HepG2 (cell line): ENCODE measurements at regions of chr17 and their contacts with region 1.

Region 1: DNA sequence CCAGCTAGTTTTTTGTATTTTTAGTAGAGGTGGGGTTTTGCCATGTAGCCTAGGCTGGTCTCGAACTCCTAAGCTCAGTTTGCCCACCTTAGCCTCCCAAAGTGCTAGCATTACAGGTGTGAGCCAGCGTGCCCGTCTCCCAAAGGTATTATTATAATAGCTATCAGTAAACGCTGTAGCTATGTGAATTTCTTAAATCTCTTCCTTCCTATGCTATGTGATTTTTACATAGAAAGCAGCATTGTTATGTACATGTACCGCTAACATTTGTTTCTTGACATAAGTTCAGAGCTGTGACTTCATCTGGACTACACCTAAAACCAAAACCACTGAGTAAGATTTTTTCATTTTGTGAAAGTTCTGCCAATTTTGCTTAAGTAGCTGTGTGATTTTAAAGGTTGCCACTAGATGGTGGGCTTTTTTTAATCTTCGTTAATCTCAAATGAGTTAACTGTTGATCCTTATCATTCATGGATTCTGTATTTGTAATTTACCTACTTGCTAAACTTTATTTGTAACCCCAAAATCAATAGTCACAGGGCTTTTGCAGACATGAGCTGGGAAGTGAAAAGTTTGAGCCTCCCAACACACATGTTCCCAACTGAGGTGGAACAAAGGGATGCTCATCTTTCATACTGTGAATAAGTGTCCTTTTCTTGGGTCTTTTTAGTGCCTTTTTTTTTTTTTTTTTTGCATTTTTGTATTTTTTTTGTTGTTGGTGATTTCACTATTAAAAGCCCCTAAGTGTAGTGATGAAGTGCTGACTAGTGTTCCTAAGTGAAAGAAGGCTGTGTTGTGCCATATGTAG is 21.9 kb downstream of the PRKAR1A start:
- DNase-seq: no peak
- ATAC-seq: no peak
- H3K4me3 ChIP-seq: no peak overlapping the region
- H3K27ac ChIP-seq: no peak overlapping the region
- H3K4me1 ChIP-seq: peaks cover 18% of the 10 kb centered on the region
- H3K27me3 ChIP-seq: no peaks in the 10 kb centered on the region
- CTCF ChIP-seq: 0 out of 2 replicates have a peak, but pooled peaks have one; percentile 34
- EP300 ChIP-seq: no peak
- POLR2A ChIP-seq: no peak; a peak in 1 of 4 replicates
- RAD21 ChIP-seq: no peak

Region 2: DNA sequence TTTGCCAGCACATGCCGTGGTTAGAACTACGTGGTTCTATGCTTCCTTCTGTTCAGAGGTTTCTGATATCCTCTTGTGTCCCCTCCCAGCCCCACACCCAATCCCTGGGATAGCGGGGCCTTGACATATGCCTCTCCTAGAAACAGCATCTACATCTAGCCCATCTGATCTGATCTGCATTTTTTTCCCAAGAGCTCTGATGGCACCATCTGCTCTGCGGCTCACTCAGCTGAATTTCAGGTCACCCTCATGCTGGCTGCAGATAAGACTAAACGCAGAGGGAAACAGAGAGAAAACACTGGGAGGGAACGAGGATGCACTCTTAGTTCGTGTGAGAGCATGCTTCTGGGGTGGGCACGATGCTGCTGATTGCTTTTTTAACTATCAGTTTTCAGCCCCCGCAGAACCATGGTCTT is 87.5 kb before region 1 on chr17:
- CTCF ChIA-PET with region 1: no interaction called
- POLR2A ChIA-PET with region 1: no interaction called
- in situ Hi-C with region 1: no loop called
- intact Hi-C with region 1: no loop called
- DNase-seq: no peak
- ATAC-seq: no peak
- H3K4me3 ChIP-seq: no peak overlapping the region
- H3K27ac ChIP-seq: no peak overlapping the region
- H3K4me1 ChIP-seq: peaks cover 12% of the 10 kb centered on the region
- H3K27me3 ChIP-seq: no peaks in the 10 kb centered on the region
- CTCF ChIP-seq: no peak
- EP300 ChIP-seq: no peak
- POLR2A ChIP-seq: no peak
- RAD21 ChIP-seq: no peak

Region 3: GRCh38 chr17:68544111-68544915 is 10.2 kb after region 1 on chr17:
- CTCF ChIA-PET with region 1: no interaction called
- POLR2A ChIA-PET with region 1: no interaction called
- in situ Hi-C with region 1: no loop called
- intact Hi-C with region 1: no loop called
- DNase-seq: no peak
- ATAC-seq: no peak
- H3K4me3 ChIP-seq: no peak overlapping the region
- H3K27ac ChIP-seq: no peak overlapping the region
- H3K4me1 ChIP-seq: no peaks in the 10 kb centered on the region
- H3K27me3 ChIP-seq: no peaks in the 10 kb centered on the region
- CTCF ChIP-seq: no peak
- EP300 ChIP-seq: no peak
- POLR2A ChIP-seq: no peak
- RAD21 ChIP-seq: no peak

Region 4: DNA sequence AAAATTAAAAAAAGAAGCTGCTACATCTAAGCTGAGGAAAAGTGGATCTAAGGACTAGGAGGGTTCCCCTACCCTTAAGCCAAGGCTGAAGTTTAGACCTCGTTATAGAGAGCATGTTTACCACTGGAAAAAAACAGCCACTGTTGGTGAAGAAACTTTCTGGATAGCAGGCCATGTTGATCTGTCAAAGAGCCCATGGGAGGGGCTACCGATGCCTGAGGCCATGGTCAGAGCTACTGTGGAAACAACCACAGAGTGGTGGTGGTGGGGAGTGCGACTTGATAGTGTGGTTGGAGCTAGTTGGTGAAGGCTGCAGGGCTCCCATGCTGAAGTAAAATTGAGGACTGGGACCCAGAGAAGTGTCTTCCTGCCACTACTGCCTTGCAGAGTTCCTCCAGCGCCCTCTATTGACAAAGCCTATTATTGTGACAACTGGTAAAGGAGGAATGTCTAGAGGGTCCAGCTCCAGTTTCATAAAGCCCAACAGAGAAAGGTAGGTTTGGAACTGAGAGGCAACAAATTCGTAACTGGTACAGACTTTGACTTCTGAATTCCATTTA is 79.7 kb after region 1 on chr17:
- CTCF ChIA-PET with region 1: no interaction called
- POLR2A ChIA-PET with region 1: interaction called, 4 read pairs
- in situ Hi-C with region 1: no loop called
- intact Hi-C with region 1: loop called (anchors 2 kb)
- DNase-seq: peak; percentile 86
- ATAC-seq: peak; percentile 92
- H3K4me3 ChIP-seq: peak overlapping the region in 2 of 3 experiments; percentile 23 to 47; a peak in 2 of 6 replicates
- H3K27ac ChIP-seq: peak overlapping the region; percentile 37
- H3K4me1 ChIP-seq: peaks cover 35% of the 10 kb centered on the region
- H3K27me3 ChIP-seq: no peaks in the 10 kb centered on the region; a peak in 1 of 5 replicates
- CTCF ChIP-seq: peak; percentile 94
- EP300 ChIP-seq: no peak; a peak in 1 of 4 replicates
- POLR2A ChIP-seq: no peak
- RAD21 ChIP-seq: peak; percentile 85

Region 5: DNA sequence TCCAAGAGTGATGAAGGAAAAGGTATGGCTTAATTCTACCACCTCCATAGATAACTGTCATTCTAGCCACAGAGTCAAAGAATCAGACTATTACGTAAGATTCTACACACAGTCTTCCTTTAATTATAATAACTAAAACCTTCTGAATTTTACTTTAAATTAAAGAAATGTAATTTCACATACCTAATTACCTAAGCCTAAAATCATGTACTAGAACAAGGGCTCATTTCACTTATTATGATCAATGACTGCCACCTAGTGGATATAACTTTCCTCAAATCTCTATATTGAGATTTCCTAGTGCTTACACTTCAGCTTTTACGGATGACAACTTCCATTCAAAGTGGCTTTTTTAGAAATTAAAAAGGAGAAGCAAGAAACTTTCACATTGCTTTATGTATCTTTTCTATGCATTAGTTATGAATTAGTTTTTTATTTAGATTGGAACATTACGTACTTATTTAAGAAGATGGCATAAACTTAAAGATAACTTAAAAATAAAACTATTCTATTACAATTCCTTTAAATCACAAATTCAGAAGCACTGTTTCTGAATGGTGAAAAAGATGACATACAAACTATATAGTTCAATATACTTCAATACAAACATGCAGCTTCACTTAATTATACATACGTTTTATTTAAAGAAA is 712.8 kb after region 1 on chr17:
- CTCF ChIA-PET with region 1: no interaction called
- POLR2A ChIA-PET with region 1: no interaction called
- in situ Hi-C with region 1: no loop called
- intact Hi-C with region 1: loop called (anchors 5 kb)
- DNase-seq: peak; percentile 62
- ATAC-seq: no peak; the same call in 2 of the 3 replicates
- H3K4me3 ChIP-seq: no peak overlapping the region
- H3K27ac ChIP-seq: no peak overlapping the region
- H3K4me1 ChIP-seq: no peaks in the 10 kb centered on the region
- H3K27me3 ChIP-seq: no peaks in the 10 kb centered on the region
- CTCF ChIP-seq: peak; percentile 78
- EP300 ChIP-seq: no peak
- POLR2A ChIP-seq: no peak
- RAD21 ChIP-seq: peak; percentile 69